GM12878 (cell line): ENCODE measurements at regions of chr3 and their contacts with region 1.

Region 1: GRCh38 chr3:149771652-149772271 is 19.5 kb upstream of the COMMD2 start:
- DNase-seq: no peak
- ATAC-seq: peak; percentile 93
- H3K4me3 ChIP-seq: no peak overlapping the region
- H3K27ac ChIP-seq: no peak overlapping the region
- H3K4me1 ChIP-seq: no peaks in the 10 kb centered on the region
- H3K27me3 ChIP-seq: no peaks in the 10 kb centered on the region; a peak in 1 of 4 replicates
- CTCF ChIP-seq: peak; percentile 79 to 83 (median 79)
- EP300 ChIP-seq: no peak
- POLR2A ChIP-seq: no peak
- RAD21 ChIP-seq: peak; percentile 72

Region 2: DNA sequence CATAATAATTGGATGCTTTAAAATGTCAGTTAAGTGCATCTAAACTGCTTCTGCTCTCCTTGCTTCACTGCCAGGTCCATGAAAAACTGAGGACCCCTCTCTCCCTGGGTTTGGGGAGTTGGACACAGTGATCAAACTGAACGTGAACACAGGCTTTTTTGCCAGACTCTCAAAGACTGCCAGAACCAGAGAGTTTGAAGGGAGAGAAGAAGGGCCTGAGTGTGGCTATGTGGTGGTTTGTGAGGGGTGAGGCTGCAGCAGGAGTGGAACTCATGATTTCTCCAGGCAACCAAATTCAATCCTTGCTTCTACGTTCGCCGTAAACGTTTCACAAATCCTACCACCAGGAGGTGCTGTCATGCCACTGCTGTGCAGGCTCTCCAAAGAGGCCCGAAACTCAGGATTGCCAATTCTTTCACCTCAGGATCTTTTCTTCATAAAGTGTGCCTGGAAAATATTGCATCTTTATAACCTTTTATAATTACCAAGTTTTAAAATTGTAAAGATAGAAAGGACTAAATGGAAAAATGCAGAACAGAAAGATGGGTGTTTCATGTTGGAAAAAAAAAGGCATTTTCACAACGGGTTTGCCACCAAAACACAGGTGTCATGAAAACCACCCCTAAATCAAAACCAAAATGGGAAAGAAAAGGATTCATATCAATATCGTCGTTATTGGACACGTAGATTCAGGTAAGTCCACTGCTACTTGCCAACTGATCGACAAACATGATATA is 277.6 kb before region 1 on chr3:
- CTCF ChIA-PET with region 1: interaction called, 21 read pairs
- POLR2A ChIA-PET with region 1: no interaction called
- RAD21 ChIA-PET with region 1: interaction called, 17 read pairs
- SMC1A ChIA-PET with region 1: interaction called, 7 read pairs
- in situ Hi-C with region 1: no loop called
- intact Hi-C with region 1: loop called (anchors 1 kb)
- DNase-seq: no peak
- ATAC-seq: peak; percentile 83
- H3K4me3 ChIP-seq: no peak overlapping the region
- H3K27ac ChIP-seq: no peak overlapping the region
- H3K4me1 ChIP-seq: no peaks in the 10 kb centered on the region
- H3K27me3 ChIP-seq: no peaks in the 10 kb centered on the region; a peak in 1 of 4 replicates
- CTCF ChIP-seq: peak; percentile 57 to 80 (median 75)
- EP300 ChIP-seq: no peak
- POLR2A ChIP-seq: no peak
- RAD21 ChIP-seq: peak; percentile 86

Region 3: DNA sequence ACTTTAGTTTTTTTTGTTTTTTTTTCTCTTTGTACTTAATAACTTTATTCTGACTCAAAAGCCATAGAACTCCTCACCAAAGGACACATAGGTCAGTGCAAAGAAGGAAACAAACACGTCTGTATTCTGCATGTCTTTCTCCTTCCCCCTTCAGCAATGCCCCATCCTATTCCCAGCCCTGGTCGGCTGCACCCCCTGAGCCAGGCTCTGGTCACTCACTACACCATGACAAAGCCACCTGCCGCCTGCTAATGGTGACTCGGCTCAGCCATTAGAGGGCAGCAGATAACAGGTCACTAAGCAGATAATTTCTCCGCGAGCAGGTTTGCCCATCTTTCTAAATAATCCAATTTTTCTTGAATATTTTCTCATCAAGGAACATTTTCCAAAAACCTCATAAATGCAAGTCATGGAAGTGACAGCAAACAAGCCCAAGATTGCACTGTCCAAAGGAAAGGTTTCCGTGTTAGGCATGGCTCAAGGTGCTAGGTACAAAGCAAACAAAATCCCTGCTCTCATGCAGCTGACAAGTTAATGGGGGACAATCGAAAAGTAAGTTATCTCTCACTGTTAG is 259.5 kb before region 1 on chr3:
- CTCF ChIA-PET with region 1: interaction called, 222 read pairs
- POLR2A ChIA-PET with region 1: no interaction called
- RAD21 ChIA-PET with region 1: interaction called, 37 read pairs
- SMC1A ChIA-PET with region 1: interaction called, 86 read pairs
- in situ Hi-C with region 1: loop called (anchors 5 kb)
- intact Hi-C with region 1: loop called (anchors 1 kb)
- DNase-seq: no peak
- ATAC-seq: peak; percentile 92
- H3K4me3 ChIP-seq: no peak overlapping the region
- H3K27ac ChIP-seq: no peak overlapping the region
- H3K4me1 ChIP-seq: no peaks in the 10 kb centered on the region; the same call in 1 of the 2 replicates
- H3K27me3 ChIP-seq: no peaks in the 10 kb centered on the region
- CTCF ChIP-seq: peak; percentile 81 to 85 (median 84); a peak in 5 of 6 replicates
- EP300 ChIP-seq: no peak
- POLR2A ChIP-seq: no peak
- RAD21 ChIP-seq: peak; percentile 93

Region 4: DNA sequence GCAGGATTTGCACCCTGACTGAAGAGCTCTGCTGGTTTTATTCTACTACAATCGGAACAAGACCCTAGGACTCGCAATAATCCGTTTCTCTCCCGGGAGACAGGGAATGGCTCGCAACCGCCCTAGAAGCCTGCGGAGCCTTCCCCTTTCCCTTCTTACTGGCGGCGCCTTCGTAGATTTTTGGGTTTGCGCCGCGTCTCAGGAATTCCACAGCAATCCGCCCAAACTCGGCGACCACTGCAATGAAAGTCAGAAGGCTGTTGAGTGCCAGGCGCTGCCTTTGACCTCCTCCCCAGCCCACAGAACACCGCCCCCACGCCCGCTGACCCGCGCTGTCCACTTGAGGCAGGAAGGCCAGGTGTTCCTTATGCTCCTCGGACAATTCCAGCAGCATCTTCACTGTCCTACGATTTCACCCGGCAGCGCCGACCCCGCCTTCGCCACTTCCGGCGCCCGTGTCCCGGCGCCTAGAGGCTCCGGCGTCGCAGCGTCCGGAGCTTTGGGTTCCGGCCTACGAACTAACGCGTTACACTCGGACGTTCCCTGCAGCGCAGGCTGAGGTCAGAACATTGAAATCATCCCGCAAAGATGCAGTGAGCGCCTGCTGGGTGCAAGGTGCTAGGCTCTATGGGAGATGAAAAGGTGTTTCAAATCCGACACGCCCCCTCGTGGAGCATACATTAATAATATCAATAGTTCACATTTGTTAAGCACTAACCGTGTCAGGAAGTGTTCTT is 19.5 kb before region 1 on chr3 and contains the start of gene COMMD2:
- CTCF ChIA-PET with region 1: interaction called, 24 read pairs
- POLR2A ChIA-PET with region 1: no interaction called
- RAD21 ChIA-PET with region 1: interaction called, 8 read pairs
- SMC1A ChIA-PET with region 1: interaction called, 17 read pairs
- in situ Hi-C with region 1: no loop called
- intact Hi-C with region 1: no loop called
- DNase-seq: peak; percentile 84
- ATAC-seq: peak; percentile 100
- H3K4me3 ChIP-seq: peak within 1 kb of the TSS; percentile 85
- H3K27ac ChIP-seq: peak within 1 kb of the TSS; percentile 54
- H3K4me1 ChIP-seq: no peaks in the 10 kb centered on the region
- H3K27me3 ChIP-seq: no peaks in the 10 kb centered on the region
- CTCF ChIP-seq: peak; percentile 21 to 47 (median 46); a peak in 5 of 6 replicates
- EP300 ChIP-seq: no peak
- POLR2A ChIP-seq: peak; percentile 95
- RAD21 ChIP-seq: peak; percentile 40
- polyA plus RNA-seq, gene COMMD2: 59.4 to 97.0 TPM

Region 5: DNA sequence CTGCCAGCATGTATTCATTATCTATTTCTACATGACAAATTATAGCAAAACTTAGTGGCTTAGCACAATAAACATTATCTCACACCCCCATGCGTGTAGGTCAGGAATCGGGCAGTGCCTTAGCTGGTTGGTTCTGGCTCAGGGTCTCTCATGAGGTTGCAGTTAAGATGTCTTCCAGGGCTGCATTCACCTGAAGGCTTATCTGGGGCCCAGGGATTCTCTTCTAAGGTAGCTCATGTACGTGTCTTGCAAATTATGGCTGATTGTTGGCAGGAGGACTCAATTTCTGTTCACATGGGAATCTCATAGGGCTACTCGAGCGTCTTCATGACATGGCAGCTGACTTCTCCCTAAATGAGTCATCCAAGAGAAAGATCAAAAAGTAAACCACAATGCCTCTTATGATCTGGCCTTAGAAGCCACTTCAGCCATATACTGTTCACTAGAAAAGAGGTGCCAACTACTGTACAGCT is 593.4 kb after region 1 on chr3:
- CTCF ChIA-PET with region 1: no interaction called
- POLR2A ChIA-PET with region 1: no interaction called
- RAD21 ChIA-PET with region 1: no interaction called
- SMC1A ChIA-PET with region 1: no interaction called
- in situ Hi-C with region 1: no loop called
- intact Hi-C with region 1: no loop called
- DNase-seq: peak; percentile 53
- ATAC-seq: peak; percentile 91
- H3K4me3 ChIP-seq: no peak overlapping the region
- H3K27ac ChIP-seq: no peak overlapping the region
- H3K4me1 ChIP-seq: no peaks in the 10 kb centered on the region
- H3K27me3 ChIP-seq: no peaks in the 10 kb centered on the region
- CTCF ChIP-seq: no peak
- EP300 ChIP-seq: no peak
- POLR2A ChIP-seq: no peak
- RAD21 ChIP-seq: no peak